Caco-2 (cell line): ENCODE measurements at regions of chr20 and their contacts with region 1.

Region 1: GRCh38 chr20:35954200-35954906 is at the start of gene SCAND1:
- DNase-seq: peak; percentile 100
- H3K4me3 ChIP-seq: peak within 1 kb of the TSS; percentile 86
- H3K4me3 Mint-ChIP-seq: peak within 1 kb of the TSS; percentile 88
- H3K27ac Mint-ChIP-seq: peak within 1 kb of the TSS; percentile 96
- H3K4me1 ChIP-seq: peaks cover 22% of the 10 kb centered on the region
- H3K4me1 Mint-ChIP-seq: peaks cover 9% of the 10 kb centered on the region
- H3K27me3 ChIP-seq: no peaks in the 10 kb centered on the region
- H3K27me3 Mint-ChIP-seq: no peaks in the 10 kb centered on the region
- CTCF ChIP-seq: peak; percentile 99 to 100
- total RNA-seq, gene SCAND1: 125 and 129 TPM in 2 replicates

Region 2: GRCh38 chr20:35463455-35464300 is 490.7 kb before region 1 on chr20:
- CTCF ChIA-PET with region 1: no interaction called
- POLR2A ChIA-PET with region 1: interaction called, 7 read pairs
- intact Hi-C with region 1: loop called (anchors 10 kb)
- DNase-seq: peak; percentile 83 to 88
- H3K4me3 ChIP-seq: no peak overlapping the region
- H3K4me3 Mint-ChIP-seq: no peak overlapping the region
- H3K27ac Mint-ChIP-seq: no peak overlapping the region
- H3K4me1 ChIP-seq: peaks cover 13% of the 10 kb centered on the region
- H3K4me1 Mint-ChIP-seq: peaks cover 18% of the 10 kb centered on the region
- H3K27me3 ChIP-seq: no peaks in the 10 kb centered on the region
- H3K27me3 Mint-ChIP-seq: no peaks in the 10 kb centered on the region
- CTCF ChIP-seq: peak; percentile 96 to 97

Region 3: GRCh38 chr20:35771689-35772562 is 182.4 kb before region 1 on chr20 and contains the start of gene PHF20:
- CTCF ChIA-PET with region 1: interaction called, 16 read pairs
- POLR2A ChIA-PET with region 1: interaction called, 8 read pairs
- intact Hi-C with region 1: no loop called
- DNase-seq: peak; percentile 100
- H3K4me3 ChIP-seq: peak within 1 kb of the TSS; percentile 73
- H3K4me3 Mint-ChIP-seq: peak within 1 kb of the TSS; percentile 80
- H3K27ac Mint-ChIP-seq: peak within 1 kb of the TSS; percentile 90
- H3K4me1 ChIP-seq: peaks cover 58% of the 10 kb centered on the region
- H3K4me1 Mint-ChIP-seq: peaks cover 54% of the 10 kb centered on the region
- H3K27me3 ChIP-seq: no peaks in the 10 kb centered on the region
- H3K27me3 Mint-ChIP-seq: no peaks in the 10 kb centered on the region
- CTCF ChIP-seq: no peak
- total RNA-seq, gene PHF20: 101 and 109 TPM in 2 replicates

Region 4: DNA sequence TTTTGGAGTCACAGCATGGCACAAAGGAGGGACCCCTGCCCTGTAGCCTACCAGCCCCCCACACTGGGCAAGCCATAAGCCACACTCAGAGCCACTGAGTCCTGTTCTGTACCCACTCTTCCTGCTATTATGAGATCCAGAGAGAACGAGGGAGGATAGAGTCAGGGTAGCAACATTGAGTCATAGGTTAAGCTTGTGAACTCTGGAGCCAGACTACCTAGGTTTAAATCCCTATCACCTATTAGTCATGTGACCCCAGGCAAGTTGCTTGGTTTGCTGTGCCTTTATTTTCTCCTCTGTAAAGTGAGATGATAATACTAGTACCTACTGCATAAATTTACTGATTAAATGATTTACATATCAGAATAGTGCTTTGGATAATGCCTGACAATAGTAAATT is 14.6 kb after region 1 on chr20:
- CTCF ChIA-PET with region 1: interaction called, 17 read pairs
- POLR2A ChIA-PET with region 1: interaction called, 8 read pairs
- intact Hi-C with region 1: loop called (anchors 1 kb)
- DNase-seq: peak; percentile 41 to 43
- H3K4me3 ChIP-seq: no peak overlapping the region
- H3K4me3 Mint-ChIP-seq: no peak overlapping the region
- H3K27ac Mint-ChIP-seq: peak overlapping the region; percentile 1
- H3K4me1 ChIP-seq: peaks cover 16% of the 10 kb centered on the region
- H3K4me1 Mint-ChIP-seq: peaks cover 22% of the 10 kb centered on the region
- H3K27me3 ChIP-seq: no peaks in the 10 kb centered on the region
- H3K27me3 Mint-ChIP-seq: no peaks in the 10 kb centered on the region
- CTCF ChIP-seq: no peak

Region 5: GRCh38 chr20:36085686-36086267 is 131.4 kb after region 1 on chr20:
- CTCF ChIA-PET with region 1: interaction called, 14 read pairs
- POLR2A ChIA-PET with region 1: interaction called, 9 read pairs
- intact Hi-C with region 1: loop called (anchors 5 kb)
- DNase-seq: peak; percentile 95 to 99
- H3K4me3 ChIP-seq: no peak overlapping the region
- H3K4me3 Mint-ChIP-seq: peak overlapping the region; percentile 66
- H3K27ac Mint-ChIP-seq: peak overlapping the region; percentile 99
- H3K4me1 ChIP-seq: peaks cover 80% of the 10 kb centered on the region
- H3K4me1 Mint-ChIP-seq: peaks cover 67% of the 10 kb centered on the region
- H3K27me3 ChIP-seq: no peaks in the 10 kb centered on the region
- H3K27me3 Mint-ChIP-seq: no peaks in the 10 kb centered on the region
- CTCF ChIP-seq: no peak

Region 6: DNA sequence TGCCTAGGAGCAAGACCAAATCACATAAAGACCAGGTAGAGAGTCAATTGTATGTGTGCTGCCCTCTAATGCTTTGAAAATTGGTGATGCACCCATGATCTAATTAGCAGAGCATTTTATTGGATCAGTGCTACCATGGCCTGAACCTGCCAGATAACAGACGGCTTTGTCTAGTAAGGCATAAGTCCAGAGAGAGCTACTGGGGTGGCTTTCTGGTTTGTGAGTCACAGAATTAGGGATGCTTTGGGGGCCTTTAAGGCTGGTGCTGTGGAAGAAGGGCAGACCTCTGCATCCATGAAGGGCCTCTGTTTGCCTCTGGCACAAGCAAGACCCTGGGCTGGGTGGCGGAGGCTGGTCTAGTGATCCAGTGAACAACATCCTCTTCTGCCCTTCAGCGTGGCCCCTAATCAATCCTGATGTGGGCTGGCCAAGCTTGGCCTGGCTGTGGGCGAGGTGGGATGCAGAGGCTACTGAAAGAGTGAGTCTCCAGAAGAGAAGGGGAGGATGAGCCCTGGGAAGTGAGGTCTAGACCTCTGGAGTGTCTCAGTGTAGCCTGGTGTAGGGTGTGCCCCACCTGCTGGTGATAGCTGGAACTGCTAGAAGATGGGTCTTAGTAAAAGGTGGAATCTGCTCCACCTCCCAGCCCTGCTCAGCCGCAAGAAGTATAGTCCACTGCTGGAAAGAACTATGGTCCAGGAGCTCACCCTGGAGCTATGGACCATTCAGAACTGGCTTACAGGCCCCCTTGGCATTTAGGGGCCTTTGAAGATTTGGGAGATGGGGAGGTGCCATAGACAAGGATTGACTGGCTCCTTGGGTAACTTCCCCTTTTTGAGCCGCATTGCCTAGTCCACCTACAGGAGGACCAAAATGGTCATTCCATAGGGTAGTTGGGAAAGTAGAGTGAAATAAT is 245.2 kb after region 1 on chr20:
- CTCF ChIA-PET with region 1: interaction called, 11 read pairs
- POLR2A ChIA-PET with region 1: no interaction called
- intact Hi-C with region 1: no loop called
- DNase-seq: peak; percentile 90 to 93
- H3K4me3 ChIP-seq: no peak overlapping the region
- H3K4me3 Mint-ChIP-seq: no peak overlapping the region
- H3K27ac Mint-ChIP-seq: no peak overlapping the region
- H3K4me1 ChIP-seq: no peaks in the 10 kb centered on the region
- H3K4me1 Mint-ChIP-seq: no peaks in the 10 kb centered on the region
- H3K27me3 ChIP-seq: no peaks in the 10 kb centered on the region
- H3K27me3 Mint-ChIP-seq: no peaks in the 10 kb centered on the region
- CTCF ChIP-seq: peak; percentile 99 to 100